Prostate gland (tissue), 2 donors: ENCODE measurements at regions of chr20 and their contacts with region 1.

Region 1: GRCh38 chr20:47272893-47273590 is 83.5 kb downstream of the ZMYND8 start:
- DNase-seq: peak; percentile 71
- H3K4me3 ChIP-seq: no peak overlapping the region
- H3K27ac ChIP-seq: peak overlapping the region; percentile 37 to 59
- H3K4me1 ChIP-seq: no peaks in the 10 kb centered on the region
- H3K27me3 ChIP-seq: no peaks in the 10 kb centered on the region
- CTCF ChIP-seq: peak; percentile 78 to 98 (median 94)
- POLR2A ChIP-seq: no peak

Region 2: GRCh38 chr20:47027042-47027441 is 246.0 kb before region 1 on chr20:
- intact Hi-C with region 1: no loop called
- DNase-seq: peak; percentile 63
- H3K4me3 ChIP-seq: no peak overlapping the region
- H3K27ac ChIP-seq: no peak overlapping the region
- H3K4me1 ChIP-seq: peaks cover 16% of the 10 kb centered on the region
- H3K27me3 ChIP-seq: no peaks in the 10 kb centered on the region
- CTCF ChIP-seq: peak in 1 of 4 experiments; percentile 20
- POLR2A ChIP-seq: no peak

Region 3: GRCh38 chr20:47196091-47197081 is 76.7 kb before region 1 on chr20:
- intact Hi-C with region 1: loop called (anchors 5 kb)
- DNase-seq: peak; percentile 25
- H3K4me3 ChIP-seq: no peak overlapping the region
- H3K27ac ChIP-seq: no peak overlapping the region
- H3K4me1 ChIP-seq: no peaks in the 10 kb centered on the region
- H3K27me3 ChIP-seq: no peaks in the 10 kb centered on the region
- CTCF ChIP-seq: peak; percentile 78 to 93 (median 88)
- POLR2A ChIP-seq: no peak

Region 4: DNA sequence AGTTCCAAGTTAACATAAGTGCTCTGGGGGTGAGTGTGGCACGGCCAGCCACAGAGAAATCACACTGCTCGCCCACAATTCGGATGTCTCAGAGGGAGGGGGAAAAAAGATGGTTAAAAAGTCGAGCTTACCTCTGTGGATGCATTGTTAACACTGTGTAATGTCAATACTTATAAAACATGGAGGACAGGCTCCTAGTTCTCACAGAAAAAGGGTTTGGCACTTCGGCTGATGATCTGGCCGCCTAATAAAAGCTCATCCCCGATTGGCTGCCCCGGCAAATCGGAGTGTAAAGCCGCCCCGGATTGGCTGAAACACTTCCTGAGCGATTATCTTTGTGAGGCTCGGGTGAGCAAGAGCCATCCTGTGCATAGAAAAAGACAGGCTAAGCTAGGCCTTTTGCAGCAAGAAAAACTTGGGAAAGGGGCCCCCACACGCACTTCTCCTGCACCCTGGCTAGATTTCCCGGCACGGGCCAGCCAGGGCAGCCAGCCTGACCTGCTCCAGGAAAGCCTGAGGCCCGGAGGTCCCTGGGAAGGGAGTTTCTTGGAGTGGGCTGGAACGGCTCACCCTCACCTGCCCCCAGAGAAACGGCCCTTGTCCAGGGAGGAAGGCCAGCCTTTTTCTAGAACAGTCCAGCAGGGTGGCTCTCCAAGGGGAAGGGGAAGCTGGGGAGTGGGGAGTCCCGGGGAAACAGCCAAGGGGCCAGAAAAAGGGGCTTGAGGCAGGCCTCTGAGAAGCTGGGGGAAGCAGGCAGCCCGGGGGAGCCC is 83.7 kb after region 1 on chr20 and contains the start of gene ZMYND8:
- intact Hi-C with region 1: loop called (anchors 5 kb)
- DNase-seq: peak; percentile 94
- H3K4me3 ChIP-seq: no peak within 1 kb of the TSS
- H3K27ac ChIP-seq: peak within 1 kb of the TSS; percentile 99
- H3K4me1 ChIP-seq: peaks cover 75% of the 10 kb centered on the region
- H3K27me3 ChIP-seq: no peaks in the 10 kb centered on the region
- CTCF ChIP-seq: no peak
- POLR2A ChIP-seq: no peak
- total RNA-seq, gene ZMYND8: 19.9 to 70.9 TPM

Region 5: DNA sequence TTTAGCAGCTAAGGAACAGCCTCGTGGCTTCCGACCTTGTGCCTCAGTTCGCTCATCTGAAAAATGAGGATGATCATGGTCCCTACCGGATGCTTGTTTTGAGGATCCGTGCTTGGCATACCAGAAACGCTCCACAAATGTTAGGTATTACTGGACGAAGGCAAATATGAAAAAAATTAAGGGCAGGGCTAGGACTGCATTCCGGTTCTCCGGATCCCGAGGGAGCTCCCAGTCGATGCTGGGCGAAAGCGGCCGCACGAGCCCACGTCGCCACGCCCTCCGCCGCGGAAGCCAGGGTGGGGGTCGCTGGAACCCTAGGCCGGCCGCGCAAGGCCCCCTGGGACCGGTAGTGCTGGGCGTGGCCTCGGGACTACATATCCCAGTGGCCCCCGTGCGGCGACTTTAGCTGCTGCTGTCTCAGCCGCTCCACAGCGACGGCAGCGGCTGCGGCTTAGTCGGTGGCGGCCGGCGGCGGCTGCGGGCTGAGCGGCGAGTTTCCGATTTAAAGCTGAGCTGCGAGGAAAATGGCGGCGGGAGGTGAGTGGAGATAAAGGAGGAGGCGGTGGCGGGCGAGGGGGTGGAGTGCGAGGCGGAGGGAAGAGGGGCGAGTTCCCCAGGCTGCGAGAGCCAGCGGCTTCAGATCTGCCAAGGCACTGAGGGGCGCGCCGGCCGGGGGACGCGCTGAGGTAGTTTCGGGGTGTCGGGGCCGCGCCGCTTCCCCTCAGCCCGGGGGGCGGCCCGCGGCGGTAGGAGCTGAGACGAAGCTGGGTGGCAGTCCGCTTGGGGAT is 228.6 kb after region 1 on chr20 and contains the start of gene NCOA3:
- intact Hi-C with region 1: loop called (anchors 10 kb)
- DNase-seq: peak; percentile 92
- H3K4me3 ChIP-seq: peak within 1 kb of the TSS; percentile 85 to 98
- H3K27ac ChIP-seq: peak within 1 kb of the TSS; percentile 88 to 91
- H3K4me1 ChIP-seq: no peaks in the 10 kb centered on the region
- H3K27me3 ChIP-seq: no peaks in the 10 kb centered on the region
- CTCF ChIP-seq: peak; percentile 21 to 80 (median 59)
- POLR2A ChIP-seq: peak; percentile 92
- total RNA-seq, gene NCOA3: 21.6 to 35.6 TPM

Region 6: GRCh38 chr20:47886460-47887041 is 613.5 kb after region 1 on chr20:
- intact Hi-C with region 1: no loop called
- DNase-seq: no peak
- H3K4me3 ChIP-seq: no peak overlapping the region
- H3K27ac ChIP-seq: no peak overlapping the region
- H3K4me1 ChIP-seq: no peaks in the 10 kb centered on the region
- H3K27me3 ChIP-seq: no peaks in the 10 kb centered on the region
- CTCF ChIP-seq: no peak
- POLR2A ChIP-seq: no peak